ENCODE measurements at regions of chr1 and their contacts with region 1.

Region 1: DNA sequence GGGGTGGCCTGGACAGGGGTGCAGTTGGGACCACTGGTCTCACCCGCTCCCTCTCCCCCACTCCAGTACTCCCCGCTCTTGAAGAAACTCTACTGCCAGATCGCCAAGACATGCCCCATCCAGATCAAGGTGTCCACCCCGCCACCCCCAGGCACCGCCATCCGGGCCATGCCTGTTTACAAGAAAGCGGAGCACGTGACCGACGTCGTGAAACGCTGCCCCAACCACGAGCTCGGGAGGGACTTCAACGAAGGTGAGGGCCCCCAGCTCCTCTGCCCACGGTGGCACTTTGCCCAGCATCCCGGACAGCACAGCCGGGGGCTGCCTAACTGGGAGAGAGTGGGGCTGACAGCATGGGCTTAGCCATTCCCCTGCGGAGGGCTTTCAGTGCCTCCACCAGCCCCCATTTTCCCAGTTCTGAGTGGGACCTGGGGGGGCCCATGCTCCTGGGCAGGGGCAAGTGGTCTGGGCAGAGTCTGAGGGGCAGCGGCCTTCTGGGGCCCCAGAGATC is 30.2 kb upstream of the CCDC27 start:
- DNase-seq: no peak
- ATAC-seq: no peak

Region 2: GRCh38 chr1:3624200-3625136 is 97.5 kb before region 1 on chr1 and contains the start of gene TPRG1L:
- intact Hi-C with region 1: loop called (anchors 5 kb)
- DNase-seq: peak; percentile 99
- ATAC-seq: peak; percentile 98
- total RNA-seq, gene TPRG1L: 46.1 TPM

Region 3: GRCh38 chr1:3676581-3677470 is 45.2 kb before region 1 on chr1:
- intact Hi-C with region 1: no loop called
- DNase-seq: peak; percentile 45
- ATAC-seq: no peak

Region 4: GRCh38 chr1:3695326-3696217 is 26.4 kb before region 1 on chr1:
- intact Hi-C with region 1: loop called (anchors 2 kb)
- DNase-seq: no peak
- ATAC-seq: peak; percentile 58

Region 5: DNA sequence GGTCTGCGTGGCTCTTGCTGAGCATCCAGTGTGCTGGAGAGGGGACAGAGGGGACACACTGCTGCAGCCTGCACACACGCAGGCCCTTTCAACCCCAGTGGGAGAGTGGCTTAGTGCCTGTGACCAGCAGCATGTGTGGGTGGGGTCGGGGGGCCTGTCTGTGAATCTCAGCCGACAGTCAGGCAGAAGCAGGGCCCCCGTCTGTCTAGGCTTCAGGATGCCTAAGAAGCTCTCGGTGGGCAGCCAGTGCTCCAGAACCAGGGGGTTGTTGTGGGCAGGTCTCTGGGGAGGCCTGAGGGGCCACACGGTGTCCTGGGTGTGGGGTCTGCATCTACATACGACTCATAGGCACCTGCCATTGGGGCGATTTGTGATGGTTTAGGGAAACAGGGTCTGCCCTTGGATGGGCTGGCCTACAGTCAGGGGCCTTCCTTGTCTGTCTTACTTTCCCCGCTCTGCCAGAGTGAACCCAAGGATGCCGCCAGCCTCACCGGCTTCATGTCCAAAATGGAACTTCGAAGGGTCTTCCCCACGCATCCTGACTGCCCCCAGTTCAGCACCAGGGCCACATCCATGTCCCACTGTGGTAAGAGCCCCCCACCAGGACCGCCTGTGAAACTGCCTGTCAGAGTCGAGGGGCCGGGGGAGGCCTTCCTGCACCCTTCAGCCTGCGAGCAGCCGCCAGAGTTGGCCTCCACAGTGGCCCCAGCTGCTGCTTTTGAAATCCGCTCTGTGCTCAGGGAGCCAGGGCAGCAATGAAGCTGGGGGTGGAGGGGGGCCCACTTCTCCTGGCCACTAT is 31.8 kb after region 1 on chr1:
- intact Hi-C with region 1: no loop called
- DNase-seq: no peak
- ATAC-seq: no peak

Region 6: DNA sequence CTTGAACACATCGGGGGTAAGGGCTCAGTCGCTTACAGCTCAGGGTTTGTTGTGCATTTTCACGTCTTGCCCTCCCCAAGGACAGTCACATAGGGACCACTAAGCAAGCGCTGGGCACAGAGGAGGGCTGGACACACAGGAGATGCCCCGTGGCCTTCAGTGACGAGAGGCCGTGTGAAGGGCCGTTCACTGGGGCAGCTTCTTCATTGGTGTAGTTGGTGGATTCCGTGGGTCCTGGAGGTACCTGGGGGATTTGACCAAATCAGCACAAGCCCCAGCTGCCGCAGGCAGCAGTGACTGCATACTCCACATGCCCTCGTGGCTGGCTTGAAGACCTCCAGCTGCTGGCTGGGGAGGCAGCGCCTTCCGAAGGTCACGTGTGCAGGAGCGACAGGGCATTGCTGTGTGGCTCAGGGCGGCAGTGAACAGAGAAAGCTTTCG is 278.8 kb after region 1 on chr1:
- intact Hi-C with region 1: no loop called
- DNase-seq: no peak
- ATAC-seq: no peak

Measured in Right ventricle myocardium inferior (tissue), 1 donor.